Esophagus muscularis mucosa (tissue), 4 donors: ENCODE measurements at regions of chr17 and their contacts with region 1.

Region 1: GRCh38 chr17:77772461-77772897 is 186.0 kb upstream of the TNRC6C start:
- DNase-seq: no peak
- H3K4me3 ChIP-seq: no peak overlapping the region
- H3K27ac ChIP-seq: no peak overlapping the region
- H3K4me1 ChIP-seq: peaks cover 7 to 32% (median 22%) of the 10 kb centered on the region in 4 donors
- H3K27me3 ChIP-seq: no peaks in the 10 kb centered on the region
- CTCF ChIP-seq: peak; percentile 44 to 70 (median 67)
- EP300 ChIP-seq: no peak
- POLR2A ChIP-seq: no peak

Region 2: DNA sequence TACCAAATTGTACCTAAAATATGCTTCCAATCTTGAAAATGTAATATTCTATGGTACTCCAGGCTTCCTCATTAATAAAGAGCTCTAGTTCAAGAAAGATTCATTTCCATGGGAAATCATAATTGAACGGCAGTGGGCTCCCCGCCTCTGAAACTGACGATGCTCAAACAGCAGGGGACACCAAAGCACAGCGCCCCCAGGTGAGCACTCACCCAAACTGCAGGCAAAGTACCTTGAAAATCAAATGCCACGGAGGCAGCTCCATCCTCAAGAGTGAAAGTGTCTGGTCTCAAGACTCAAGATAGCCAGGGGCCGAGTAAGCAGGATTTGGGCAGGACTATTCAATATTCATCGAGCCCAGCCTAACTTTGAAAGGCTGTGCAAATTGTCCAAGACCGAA is 31.4 kb before region 1 on chr17:
- intact Hi-C with region 1: no loop called
- DNase-seq: no peak
- H3K4me3 ChIP-seq: no peak overlapping the region
- H3K27ac ChIP-seq: no peak overlapping the region
- H3K4me1 ChIP-seq: peaks cover 22 to 30% (median 27%) of the 10 kb centered on the region in 4 donors
- H3K27me3 ChIP-seq: no peaks in the 10 kb centered on the region
- CTCF ChIP-seq: peak in 2 of 3 experiments; percentile 3 to 15
- EP300 ChIP-seq: no peak
- POLR2A ChIP-seq: no peak

Region 3: GRCh38 chr17:78013683-78014467 is 241.4 kb after region 1 on chr17:
- intact Hi-C with region 1: loop called (anchors 10 kb)
- DNase-seq: no peak
- H3K4me3 ChIP-seq: no peak overlapping the region
- H3K27ac ChIP-seq: peak overlapping the region in 1 of 4 donors; percentile 27
- H3K4me1 ChIP-seq: peaks cover 6 to 14% (median 13%) of the 10 kb centered on the region in 4 donors
- H3K27me3 ChIP-seq: no peaks in the 10 kb centered on the region
- CTCF ChIP-seq: peak; percentile 81 to 86 (median 85)
- EP300 ChIP-seq: no peak
- POLR2A ChIP-seq: no peak